Ovary (tissue), 10 donors: ENCODE measurements at regions of chr10 and their contacts with region 1.

Region 1: GRCh38 chr10:89369156-89370105 is 8.4 kb upstream of the IFIT1B start:
- DNase-seq: peak in 1 of 5 donors; percentile 41
- H3K4me3 ChIP-seq: no peak overlapping the region
- H3K27ac ChIP-seq: no peak overlapping the region
- H3K4me1 ChIP-seq: peaks cover 8% of the 10 kb centered on the region
- H3K27me3 ChIP-seq: no peaks in the 10 kb centered on the region
- CTCF ChIP-seq: peak in 2 of 3 donors; percentile 28 to 71
- EP300 ChIP-seq: no peak
- POLR2A ChIP-seq: no peak

Region 2: GRCh38 chr10:89217057-89217990 is 152.1 kb before region 1 on chr10:
- intact Hi-C with region 1: no loop called
- DNase-seq: peak; percentile 33 to 75 (median 62)
- H3K4me3 ChIP-seq: no peak overlapping the region
- H3K27ac ChIP-seq: peak overlapping the region in 1 of 2 donors; percentile 53
- H3K4me1 ChIP-seq: peaks cover 2% of the 10 kb centered on the region
- H3K27me3 ChIP-seq: no peaks in the 10 kb centered on the region
- CTCF ChIP-seq: peak; percentile 61 to 86 (median 78)
- EP300 ChIP-seq: no peak
- POLR2A ChIP-seq: no peak

Region 3: GRCh38 chr10:89262086-89263051 is 107.1 kb before region 1 on chr10:
- intact Hi-C with region 1: loop called in 1 of 4 experiments (anchors 2 kb)
- DNase-seq: no peak
- H3K4me3 ChIP-seq: no peak overlapping the region
- H3K27ac ChIP-seq: no peak overlapping the region
- H3K4me1 ChIP-seq: no peaks in the 10 kb centered on the region
- H3K27me3 ChIP-seq: no peaks in the 10 kb centered on the region
- CTCF ChIP-seq: no peak
- EP300 ChIP-seq: no peak
- POLR2A ChIP-seq: no peak

Region 4: DNA sequence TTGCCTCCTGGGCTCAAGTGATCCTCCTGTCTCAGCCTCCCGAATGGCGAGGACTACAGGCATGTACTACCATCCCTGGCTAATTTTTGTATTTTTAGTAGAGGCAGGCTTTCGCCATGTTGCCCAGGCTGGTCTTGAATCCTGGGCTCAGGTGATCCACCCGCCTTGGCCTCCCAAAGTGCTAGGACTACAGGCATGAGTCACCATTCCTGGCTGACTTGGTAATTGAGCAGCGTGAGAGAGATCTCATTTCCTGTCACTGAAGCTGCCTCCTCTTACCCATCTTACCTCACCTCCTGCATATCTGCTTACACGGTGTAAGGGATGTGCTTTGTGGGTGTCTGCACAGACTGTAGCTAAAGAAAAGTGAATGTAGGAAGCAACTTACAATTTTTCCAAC is 31.9 kb before region 1 on chr10:
- intact Hi-C with region 1: loop called in 1 of 4 experiments (anchors 5 kb)
- DNase-seq: no peak
- H3K4me3 ChIP-seq: no peak overlapping the region
- H3K27ac ChIP-seq: no peak overlapping the region
- H3K4me1 ChIP-seq: peaks cover 12% of the 10 kb centered on the region
- H3K27me3 ChIP-seq: no peaks in the 10 kb centered on the region
- CTCF ChIP-seq: no peak
- EP300 ChIP-seq: no peak
- POLR2A ChIP-seq: no peak